Activated CD8-positive, alpha-beta T cell treated with anti-CD3 and anti-CD28 coated beads for 36 hours (primary cell): ENCODE measurements at regions of chr4 and their contacts with region 1.

Region 1: DNA sequence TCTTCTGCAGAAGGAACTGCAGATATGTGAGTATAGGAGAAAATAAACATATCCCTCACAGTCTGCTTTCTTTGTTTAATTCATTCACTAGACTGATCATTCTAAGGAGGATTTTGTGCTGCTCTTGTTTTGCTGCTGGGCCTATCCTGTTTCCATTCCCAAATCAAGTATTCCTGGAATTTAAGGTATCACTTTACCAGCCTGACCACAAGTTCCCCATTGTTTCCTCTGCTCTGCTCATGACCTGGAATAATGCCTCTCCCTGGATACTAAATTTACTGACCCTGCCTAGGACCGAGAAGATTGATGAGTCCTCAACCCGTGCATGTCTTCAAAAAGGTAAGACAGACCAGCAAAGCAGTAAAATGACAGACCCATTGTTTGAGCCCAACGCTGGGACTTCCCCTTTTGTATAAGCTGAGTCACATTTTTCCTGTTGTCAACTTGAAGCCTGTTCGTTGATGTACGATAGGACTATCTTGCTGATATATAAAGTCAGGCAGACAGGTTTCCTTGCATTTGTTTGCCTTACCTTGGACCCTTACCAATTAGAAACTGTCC is 85.5 kb upstream of the TET2 start:
- DNase-seq: peak; percentile 70
- ATAC-seq: peak; percentile 60
- H3K4me3 Mint-ChIP-seq: peak overlapping the region; percentile 51
- H3K27ac Mint-ChIP-seq: peak overlapping the region; percentile 89
- H3K4me1 Mint-ChIP-seq: peaks cover 52% of the 10 kb centered on the region
- H3K27me3 Mint-ChIP-seq: no peaks in the 10 kb centered on the region
- CTCF ChIP-seq: no peak

Region 2: DNA sequence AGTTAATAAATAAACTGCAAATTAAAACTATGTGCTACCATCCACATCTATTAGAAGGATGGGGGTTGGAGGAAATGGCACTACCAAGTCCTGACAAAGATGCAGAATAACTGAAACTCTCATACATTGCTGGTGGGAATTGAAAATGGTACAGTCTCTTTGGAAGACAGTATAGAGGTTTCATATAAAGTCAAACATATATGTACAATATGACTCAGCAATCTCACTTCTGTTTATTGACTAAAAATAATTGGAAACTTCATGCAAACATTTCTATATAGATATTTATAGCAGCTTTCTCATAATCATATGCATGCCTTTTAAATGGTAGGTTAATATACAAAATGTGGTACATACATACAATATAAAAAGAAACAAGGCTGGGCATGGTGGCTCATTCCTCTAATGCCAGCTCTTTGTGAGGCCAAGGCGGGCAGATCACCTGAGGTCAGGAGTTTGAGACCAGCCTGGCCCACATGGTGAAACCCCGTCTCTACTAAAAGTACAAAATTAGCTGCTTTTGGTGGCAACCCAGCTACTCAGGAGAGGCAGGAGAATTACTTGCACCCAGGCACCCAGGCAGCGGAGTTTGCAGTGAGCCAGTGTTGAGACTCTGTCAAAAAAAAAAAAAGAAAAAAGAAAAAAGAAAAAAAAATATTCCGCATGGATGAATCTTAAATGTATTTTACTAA is 341.5 kb before region 1 on chr4:
- CTCF ChIA-PET with region 1: no interaction called
- POLR2A ChIA-PET with region 1: no interaction called
- intact Hi-C with region 1: no loop called
- DNase-seq: no peak
- ATAC-seq: no peak
- H3K4me3 Mint-ChIP-seq: no peak overlapping the region
- H3K27ac Mint-ChIP-seq: no peak overlapping the region
- H3K4me1 Mint-ChIP-seq: no peaks in the 10 kb centered on the region
- H3K27me3 Mint-ChIP-seq: no peaks in the 10 kb centered on the region
- CTCF ChIP-seq: no peak

Region 3: GRCh38 chr4:104966349-104967033 is 94.7 kb before region 1 on chr4:
- CTCF ChIA-PET with region 1: interaction called, 3 read pairs
- POLR2A ChIA-PET with region 1: no interaction called
- intact Hi-C with region 1: loop called (anchors 2 kb)
- DNase-seq: peak; percentile 72
- ATAC-seq: peak; percentile 98
- H3K4me3 Mint-ChIP-seq: peak overlapping the region; percentile 49
- H3K27ac Mint-ChIP-seq: peak overlapping the region; percentile 90
- H3K4me1 Mint-ChIP-seq: peaks cover 22% of the 10 kb centered on the region
- H3K27me3 Mint-ChIP-seq: no peaks in the 10 kb centered on the region
- CTCF ChIP-seq: no peak

Region 4: DNA sequence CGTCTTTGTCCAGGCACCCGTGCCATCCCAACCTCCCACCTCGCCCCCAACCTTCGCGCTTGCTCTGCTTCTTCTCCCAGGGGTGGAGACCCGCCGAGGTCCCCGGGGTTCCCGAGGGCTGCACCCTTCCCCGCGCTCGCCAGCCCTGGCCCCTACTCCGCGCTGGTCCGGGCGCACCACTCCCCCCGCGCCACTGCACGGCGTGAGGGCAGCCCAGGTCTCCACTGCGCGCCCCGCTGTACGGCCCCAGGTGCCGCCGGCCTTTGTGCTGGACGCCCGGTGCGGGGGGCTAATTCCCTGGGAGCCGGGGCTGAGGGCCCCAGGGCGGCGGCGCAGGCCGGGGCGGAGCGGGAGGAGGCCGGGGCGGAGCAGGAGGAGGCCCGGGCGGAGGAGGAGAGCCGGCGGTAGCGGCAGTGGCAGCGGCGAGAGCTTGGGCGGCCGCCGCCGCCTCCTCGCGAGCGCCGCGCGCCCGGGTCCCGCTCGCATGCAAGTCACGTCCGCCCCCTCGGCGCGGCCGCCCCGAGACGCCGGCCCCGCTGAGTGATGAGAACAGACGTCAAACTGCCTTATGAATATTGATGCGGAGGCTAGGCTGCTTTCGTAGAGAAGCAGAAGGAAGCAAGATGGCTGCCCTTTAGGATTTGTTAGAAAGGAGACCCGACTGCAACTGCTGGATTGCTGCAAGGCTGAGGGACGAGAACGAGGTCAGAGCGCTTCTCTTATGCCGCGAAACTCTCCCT is 85.2 kb after region 1 on chr4 and contains the start of gene TET2:
- CTCF ChIA-PET with region 1: interaction called, 3 read pairs
- POLR2A ChIA-PET with region 1: interaction called, 3 read pairs
- intact Hi-C with region 1: loop called (anchors 5 kb)
- DNase-seq: peak; percentile 91
- ATAC-seq: peak; percentile 85
- H3K4me3 Mint-ChIP-seq: peak within 1 kb of the TSS; percentile 91
- H3K27ac Mint-ChIP-seq: peak within 1 kb of the TSS; percentile 100
- H3K4me1 Mint-ChIP-seq: peaks cover 36% of the 10 kb centered on the region
- H3K27me3 Mint-ChIP-seq: no peaks in the 10 kb centered on the region
- CTCF ChIP-seq: no peak
- total RNA-seq, gene TET2: 31.3 to 36.0 TPM

Region 5: DNA sequence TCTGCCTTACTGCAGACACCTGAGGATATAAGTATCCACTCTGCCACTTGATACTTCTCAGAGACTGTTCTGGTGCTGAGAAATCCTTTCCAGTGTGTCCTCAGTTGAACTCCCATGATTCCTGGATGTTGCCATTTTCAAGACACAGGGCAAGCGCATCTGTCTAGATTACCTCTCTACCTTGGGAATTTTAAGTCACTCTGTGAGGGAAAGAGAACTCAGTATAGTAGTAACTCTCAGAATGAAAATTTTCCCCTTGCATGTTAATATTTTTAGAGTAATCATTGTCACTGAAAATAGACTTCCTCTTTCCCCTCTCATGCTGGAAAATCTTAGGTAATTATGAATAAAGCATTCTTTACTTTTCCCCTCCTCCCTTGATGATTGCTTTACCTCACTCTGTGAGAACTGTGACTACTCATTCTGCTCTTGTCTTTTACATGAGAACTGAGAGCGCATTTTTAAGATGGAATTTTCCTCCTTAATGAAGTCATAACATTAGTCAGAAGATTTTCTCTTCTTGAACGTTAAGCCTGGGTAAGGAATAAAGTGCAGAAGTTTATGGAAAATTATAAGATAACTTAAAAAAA is 130.5 kb after region 1 on chr4:
- CTCF ChIA-PET with region 1: no interaction called
- POLR2A ChIA-PET with region 1: no interaction called
- intact Hi-C with region 1: loop called (anchors 5 kb)
- DNase-seq: no peak
- ATAC-seq: peak; percentile 71
- H3K4me3 Mint-ChIP-seq: peak overlapping the region; percentile 4
- H3K27ac Mint-ChIP-seq: peak overlapping the region; percentile 87
- H3K4me1 Mint-ChIP-seq: peaks cover 87% of the 10 kb centered on the region
- H3K27me3 Mint-ChIP-seq: no peaks in the 10 kb centered on the region
- CTCF ChIP-seq: no peak

Region 6: GRCh38 chr4:105306158-105306781 is 245.1 kb after region 1 on chr4:
- CTCF ChIA-PET with region 1: no interaction called
- POLR2A ChIA-PET with region 1: no interaction called
- intact Hi-C with region 1: loop called (anchors 2 kb)
- DNase-seq: peak; percentile 86
- ATAC-seq: peak; percentile 83
- H3K4me3 Mint-ChIP-seq: no peak overlapping the region
- H3K27ac Mint-ChIP-seq: peak overlapping the region; percentile 92
- H3K4me1 Mint-ChIP-seq: peaks cover 25% of the 10 kb centered on the region
- H3K27me3 Mint-ChIP-seq: no peaks in the 10 kb centered on the region
- CTCF ChIP-seq: no peak

Region 7: DNA sequence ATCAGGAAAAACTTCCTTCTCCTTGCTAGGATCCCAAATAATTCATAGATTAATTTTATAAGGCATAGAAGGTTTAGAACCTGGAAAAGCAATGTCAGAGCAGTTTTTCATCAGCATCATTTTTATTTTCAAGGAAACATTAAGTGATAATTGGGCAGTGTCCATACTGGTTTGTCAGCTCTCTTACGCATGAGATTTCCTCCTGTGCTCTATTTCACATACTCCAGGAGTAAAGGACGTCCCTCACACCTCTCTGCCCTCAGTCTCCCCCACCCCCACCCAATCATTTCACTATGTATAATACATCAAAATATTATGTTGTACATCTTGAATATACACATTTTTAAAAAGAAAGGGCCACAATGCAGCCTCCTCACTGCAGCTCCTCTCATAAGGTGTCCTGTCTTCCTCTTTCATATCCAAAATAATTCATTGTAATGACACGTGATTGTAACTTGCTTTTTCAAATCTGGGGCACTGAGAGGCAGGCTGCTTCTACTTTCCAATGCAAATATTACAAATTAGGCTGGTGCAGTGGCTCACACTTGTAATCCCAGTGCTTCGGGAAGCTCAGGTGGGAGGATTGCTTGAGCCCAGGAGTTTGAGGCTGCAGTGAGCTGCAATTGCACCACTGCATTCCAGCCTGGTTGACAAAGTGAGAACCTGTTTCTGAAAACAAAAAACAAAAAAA is 525.6 kb after region 1 on chr4:
- CTCF ChIA-PET with region 1: no interaction called
- POLR2A ChIA-PET with region 1: no interaction called
- intact Hi-C with region 1: no loop called
- DNase-seq: no peak
- ATAC-seq: no peak
- H3K4me3 Mint-ChIP-seq: no peak overlapping the region
- H3K27ac Mint-ChIP-seq: no peak overlapping the region
- H3K4me1 Mint-ChIP-seq: no peaks in the 10 kb centered on the region
- H3K27me3 Mint-ChIP-seq: peaks cover 12% of the 10 kb centered on the region
- CTCF ChIP-seq: no peak